Activated naive CD4-positive, alpha-beta T cell treated with anti-CD3 and anti-CD28 coated beads, Interleukin-2, amount 10 ng/mL, durations not matched to agents 7 days and 5 days (primary cell): ENCODE measurements at regions of chr1 and their contacts with region 1.

Region 1: GRCh38 chr1:59705466-59706302 is 109.1 kb upstream of the HOOK1 start:
- DNase-seq: no peak
- H3K4me3 Mint-ChIP-seq: no peak overlapping the region
- H3K27ac Mint-ChIP-seq: no peak overlapping the region
- H3K4me1 Mint-ChIP-seq: no peaks in the 10 kb centered on the region
- H3K27me3 Mint-ChIP-seq: peaks cover 3% of the 10 kb centered on the region

Region 2: GRCh38 chr1:59730759-59731478 is 25.2 kb after region 1 on chr1:
- CTCF ChIA-PET with region 1: no interaction called
- DNase-seq: no peak
- H3K4me3 Mint-ChIP-seq: no peak overlapping the region
- H3K27ac Mint-ChIP-seq: no peak overlapping the region
- H3K4me1 Mint-ChIP-seq: peaks cover 19% of the 10 kb centered on the region
- H3K27me3 Mint-ChIP-seq: no peaks in the 10 kb centered on the region

Region 3: DNA sequence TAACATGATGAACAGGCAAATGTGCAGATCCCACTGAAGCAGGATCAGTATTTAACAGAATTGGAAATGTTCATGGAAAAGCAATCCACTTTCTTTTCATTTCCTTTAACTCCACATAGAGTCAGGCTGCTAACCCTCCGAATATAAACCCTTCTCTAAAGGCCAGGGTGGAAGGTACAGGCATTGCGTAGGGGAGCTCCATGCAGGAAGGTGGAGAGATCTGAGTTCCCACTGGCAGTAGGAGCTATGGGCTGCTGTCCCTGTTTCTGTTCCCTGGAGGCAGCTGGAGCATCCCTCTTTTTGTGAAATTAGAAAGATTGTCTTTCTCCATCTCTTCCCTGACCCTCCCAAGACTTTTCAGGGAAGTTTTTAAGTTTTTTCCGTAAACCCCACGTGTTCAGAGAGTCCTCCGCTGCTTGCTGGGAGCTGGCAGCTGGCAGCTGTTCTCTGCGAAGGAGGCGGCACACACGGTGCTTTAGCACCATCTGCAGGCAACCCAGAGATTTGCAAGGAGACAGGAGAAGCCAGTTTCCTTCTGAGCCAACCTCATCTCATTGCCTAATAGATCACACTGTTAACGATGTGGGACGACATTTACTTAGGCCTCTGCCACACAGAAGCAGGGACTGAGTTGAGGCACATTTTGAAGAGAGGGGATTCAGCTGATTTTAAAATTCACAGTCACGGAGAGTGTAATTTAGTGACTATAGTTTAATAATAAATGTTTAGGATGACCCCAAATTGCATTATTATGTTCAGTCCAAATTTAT is 53.7 kb after region 1 on chr1:
- CTCF ChIA-PET with region 1: interaction called, 10 read pairs
- DNase-seq: peak; percentile 79
- H3K4me3 Mint-ChIP-seq: no peak overlapping the region
- H3K27ac Mint-ChIP-seq: no peak overlapping the region
- H3K4me1 Mint-ChIP-seq: peaks cover 9% of the 10 kb centered on the region
- H3K27me3 Mint-ChIP-seq: peaks cover 4% of the 10 kb centered on the region

Region 4: GRCh38 chr1:59776960-59777852 is 71.5 kb after region 1 on chr1:
- CTCF ChIA-PET with region 1: no interaction called
- DNase-seq: no peak
- H3K4me3 Mint-ChIP-seq: no peak overlapping the region
- H3K27ac Mint-ChIP-seq: no peak overlapping the region
- H3K4me1 Mint-ChIP-seq: no peaks in the 10 kb centered on the region
- H3K27me3 Mint-ChIP-seq: peaks cover 13% of the 10 kb centered on the region